ENCODE measurements at regions of chr18 and their contacts with region 1.

Region 1: DNA sequence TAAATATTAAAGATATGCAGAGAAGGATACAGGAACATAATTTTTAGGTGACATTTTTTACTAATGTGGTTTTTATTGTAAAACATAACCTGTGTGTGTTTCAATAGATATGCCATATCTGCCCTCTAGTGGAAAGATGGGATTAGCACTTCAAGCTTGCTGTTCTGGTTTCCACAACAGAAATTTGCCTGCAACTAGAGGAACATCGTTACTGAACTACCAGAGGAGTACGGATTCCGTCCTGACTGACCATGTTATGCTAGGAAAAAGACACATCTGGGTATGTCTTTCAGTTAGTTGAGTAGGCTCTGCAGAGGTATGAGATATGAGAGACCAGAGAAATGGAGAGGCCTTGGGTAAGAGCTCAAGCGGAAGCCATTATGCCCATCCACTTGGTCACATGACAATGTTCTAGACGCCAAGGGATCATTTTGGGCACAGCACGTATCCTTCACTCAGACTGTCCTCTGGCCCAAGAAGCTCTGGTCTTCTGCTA is 104.9 kb downstream of the MBD2 start:
- DNase-seq: no peak
- H3K4me3 ChIP-seq: no peak overlapping the region
- H3K27ac ChIP-seq: no peak overlapping the region
- H3K4me1 ChIP-seq: peaks cover 0 to 4% (median 0%) of the 10 kb centered on the region in 4 donors
- H3K27me3 ChIP-seq: no peaks in the 10 kb centered on the region
- CTCF ChIP-seq: peak; percentile 64 to 75 (median 67)
- EP300 ChIP-seq: no peak
- POLR2A ChIP-seq: no peak

Region 2: DNA sequence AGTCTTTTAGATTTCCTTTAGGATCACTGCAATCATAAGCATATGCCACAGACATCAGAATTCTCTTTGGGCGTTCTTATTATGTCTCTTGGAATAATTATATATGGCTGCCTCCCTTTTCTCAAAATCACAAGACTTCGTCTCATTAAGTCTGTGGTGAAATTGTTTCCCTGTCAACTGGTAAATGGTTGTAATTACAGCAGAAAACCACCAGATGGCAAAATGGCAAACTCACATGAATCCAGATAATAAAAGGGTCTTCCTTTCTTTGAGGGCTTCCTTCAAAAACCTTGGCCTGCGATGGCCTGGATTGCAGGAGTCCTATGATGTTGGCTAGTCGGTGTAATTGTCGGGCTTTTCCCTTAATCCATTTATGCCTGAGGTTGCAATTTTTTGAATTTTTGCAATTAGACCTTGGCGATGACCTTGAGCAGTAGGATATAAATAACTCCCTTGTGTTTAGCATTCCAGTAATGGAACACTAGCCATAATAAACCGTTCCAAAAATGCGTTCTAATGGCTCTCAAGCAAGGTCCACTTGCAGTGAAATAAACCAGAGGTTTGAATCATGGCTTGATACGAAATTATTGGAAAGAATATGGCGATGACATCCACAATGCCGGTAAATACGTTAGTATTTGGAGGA is 551.5 kb before region 1 on chr18:
- in situ Hi-C with region 1: loop called in 3 of 4 experiments (anchors 5 to 25 kb)
- intact Hi-C with region 1: no loop called
- DNase-seq: no peak
- H3K4me3 ChIP-seq: no peak overlapping the region
- H3K27ac ChIP-seq: no peak overlapping the region
- H3K4me1 ChIP-seq: no peaks in the 10 kb centered on the region
- H3K27me3 ChIP-seq: no peaks in the 10 kb centered on the region
- CTCF ChIP-seq: peak; percentile 45 to 59 (median 50)
- EP300 ChIP-seq: no peak
- POLR2A ChIP-seq: no peak

Region 3: DNA sequence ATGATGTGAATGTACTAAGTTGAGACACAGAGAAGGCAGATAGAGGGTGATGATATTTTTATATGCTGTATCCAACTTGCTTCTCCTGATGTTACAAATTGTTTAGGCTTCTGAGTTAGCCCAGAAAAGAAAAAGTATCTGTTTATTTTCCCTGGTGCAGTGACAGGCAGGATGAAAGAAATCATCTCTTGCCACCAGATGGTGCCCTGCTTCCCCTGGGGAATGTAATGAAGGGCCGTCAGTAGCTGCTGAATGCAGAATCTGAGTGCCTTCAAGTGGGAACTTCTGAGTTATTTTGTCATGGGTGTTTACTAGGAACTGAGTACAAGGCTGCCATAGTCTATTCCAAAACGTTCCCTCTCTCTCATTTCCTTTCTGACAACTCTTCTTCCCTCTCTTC is 420.7 kb before region 1 on chr18:
- in situ Hi-C with region 1: loop called in 3 of 4 experiments (anchors 10 kb)
- intact Hi-C with region 1: no loop called
- DNase-seq: peak; percentile 36
- H3K4me3 ChIP-seq: no peak overlapping the region
- H3K27ac ChIP-seq: no peak overlapping the region
- H3K4me1 ChIP-seq: no peaks in the 10 kb centered on the region
- H3K27me3 ChIP-seq: no peaks in the 10 kb centered on the region
- CTCF ChIP-seq: peak; percentile 38 to 59 (median 54)
- EP300 ChIP-seq: no peak
- POLR2A ChIP-seq: no peak

Region 4: GRCh38 chr18:54003195-54003594 is 116.4 kb before region 1 on chr18:
- in situ Hi-C with region 1: no loop called
- intact Hi-C with region 1: no loop called
- DNase-seq: no peak
- H3K4me3 ChIP-seq: no peak overlapping the region
- H3K27ac ChIP-seq: no peak overlapping the region
- H3K4me1 ChIP-seq: no peaks in the 10 kb centered on the region
- H3K27me3 ChIP-seq: no peaks in the 10 kb centered on the region
- CTCF ChIP-seq: no peak
- EP300 ChIP-seq: no peak
- POLR2A ChIP-seq: no peak